Right cardiac atrium (tissue), 5 donors: ENCODE measurements at regions of chr13 and their contacts with region 1.

Region 1: GRCh38 chr13:74560325-74560724 is 426.1 kb upstream of the KLF12 start:
- DNase-seq: no peak
- ATAC-seq: no peak
- H3K4me3 ChIP-seq: no peak overlapping the region
- H3K27ac ChIP-seq: no peak overlapping the region
- H3K4me1 ChIP-seq: no peaks in the 10 kb centered on the region
- H3K27me3 ChIP-seq: no peaks in the 10 kb centered on the region

Region 2: DNA sequence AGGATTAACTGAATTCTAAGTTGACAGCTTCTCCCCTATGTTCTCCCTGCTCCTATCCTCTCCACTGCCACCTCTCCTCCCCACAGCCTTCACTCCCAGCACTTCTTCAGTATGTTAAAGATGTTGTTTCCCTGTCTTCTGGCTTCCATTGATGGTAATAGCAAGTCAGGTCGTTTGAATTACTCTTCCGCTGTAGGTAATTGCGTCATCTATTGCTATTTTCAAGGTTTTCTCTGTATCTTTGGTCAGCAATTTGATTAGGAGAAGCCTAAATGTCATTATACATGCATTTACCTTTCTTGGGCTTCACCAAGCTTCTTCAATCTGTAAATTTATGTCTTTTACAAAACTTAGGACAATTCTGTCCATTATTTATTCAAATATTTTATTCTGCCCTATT is 48.8 kb before region 1 on chr13:
- intact Hi-C with region 1: loop called in 1 of 4 experiments (anchors 10 kb)
- DNase-seq: no peak
- ATAC-seq: no peak
- H3K4me3 ChIP-seq: no peak overlapping the region
- H3K27ac ChIP-seq: no peak overlapping the region
- H3K4me1 ChIP-seq: no peaks in the 10 kb centered on the region
- H3K27me3 ChIP-seq: no peaks in the 10 kb centered on the region